ENCODE measurements at regions of chr13 and their contacts with region 1.

Region 1: GRCh38 chr13:44917589-44918325 is 71.5 kb downstream of the NUFIP1 start:
- DNase-seq: peak; percentile 94
- H3K4me3 Mint-ChIP-seq: no peak overlapping the region
- H3K27ac Mint-ChIP-seq: no peak overlapping the region
- H3K4me1 Mint-ChIP-seq: no peaks in the 10 kb centered on the region
- H3K27me3 Mint-ChIP-seq: no peaks in the 10 kb centered on the region

Region 2: GRCh38 chr13:43878892-43879754 is 1038.6 kb before region 1 on chr13 and contains the start of gene CCDC122:
- intact Hi-C with region 1: loop called (anchors 1 kb)
- DNase-seq: peak; percentile 75
- H3K4me3 Mint-ChIP-seq: peak within 1 kb of the TSS; percentile 84
- H3K27ac Mint-ChIP-seq: peak within 1 kb of the TSS; percentile 81
- H3K4me1 Mint-ChIP-seq: peaks cover 28% of the 10 kb centered on the region
- H3K27me3 Mint-ChIP-seq: peaks cover 15% of the 10 kb centered on the region
- total RNA-seq, gene CCDC122: 0.86 and 1.5 TPM in 2 replicates

Region 3: GRCh38 chr13:44274452-44275205 is 643.1 kb before region 1 on chr13:
- intact Hi-C with region 1: loop called (anchors 1 kb)
- DNase-seq: peak; percentile 22
- H3K4me3 Mint-ChIP-seq: peak overlapping the region; percentile 56
- H3K27ac Mint-ChIP-seq: peak overlapping the region; percentile 85
- H3K4me1 Mint-ChIP-seq: peaks cover 60% of the 10 kb centered on the region
- H3K27me3 Mint-ChIP-seq: no peaks in the 10 kb centered on the region

Region 4: GRCh38 chr13:44710576-44710975 is 207.2 kb before region 1 on chr13:
- intact Hi-C with region 1: loop called (anchors 5 kb)
- DNase-seq: no peak
- H3K4me3 Mint-ChIP-seq: no peak overlapping the region
- H3K27ac Mint-ChIP-seq: no peak overlapping the region
- H3K4me1 Mint-ChIP-seq: peaks cover 18% of the 10 kb centered on the region
- H3K27me3 Mint-ChIP-seq: peaks cover 26% of the 10 kb centered on the region

Region 5: GRCh38 chr13:44904967-44905366 is 12.8 kb before region 1 on chr13:
- intact Hi-C with region 1: no loop called
- DNase-seq: no peak
- H3K4me3 Mint-ChIP-seq: no peak overlapping the region
- H3K27ac Mint-ChIP-seq: no peak overlapping the region
- H3K4me1 Mint-ChIP-seq: no peaks in the 10 kb centered on the region
- H3K27me3 Mint-ChIP-seq: peaks cover 5% of the 10 kb centered on the region

Region 6: DNA sequence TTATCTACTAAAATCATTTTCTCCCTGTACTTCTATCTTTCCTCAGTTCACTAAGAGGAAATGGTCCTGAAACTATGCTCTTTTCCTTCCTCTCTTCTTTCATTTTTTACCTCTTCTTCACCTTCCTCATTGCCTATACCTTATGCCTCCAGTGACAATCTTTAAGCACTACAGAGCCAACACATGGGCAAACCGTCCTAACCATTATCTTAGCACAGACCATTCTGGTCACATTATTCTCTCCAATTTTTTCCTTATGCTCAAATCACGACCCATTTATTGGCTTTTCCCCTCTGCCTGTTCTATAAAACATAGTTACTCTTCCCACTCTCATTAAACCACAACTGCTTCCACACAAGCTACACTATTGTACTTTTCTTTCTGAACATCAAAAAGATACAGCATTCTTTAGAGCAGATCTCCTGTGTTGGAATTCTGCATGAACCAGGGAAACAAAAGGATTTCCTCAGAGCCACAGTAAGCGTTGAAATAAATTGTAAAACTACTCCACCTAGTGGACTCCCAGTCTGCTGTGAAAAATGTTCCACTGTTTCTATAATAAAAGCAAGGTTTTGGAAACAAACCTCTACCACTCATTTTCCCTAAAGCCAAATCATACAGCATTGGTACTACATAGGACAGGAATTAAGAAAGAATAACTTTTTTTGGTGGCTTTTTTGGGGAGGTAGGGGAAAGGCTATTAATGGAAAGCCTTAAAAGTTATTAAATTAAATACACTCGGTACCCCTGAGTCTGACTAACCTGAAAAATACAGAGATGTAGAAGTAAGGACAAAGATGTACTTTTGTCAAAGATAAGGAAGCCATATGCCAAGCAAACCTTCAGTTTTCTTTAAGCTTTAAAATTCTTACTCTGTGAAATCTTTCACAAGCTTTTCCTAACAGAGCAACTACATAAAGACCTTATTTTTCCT is 52.1 kb after region 1 on chr13:
- intact Hi-C with region 1: loop called (anchors 1 kb)
- DNase-seq: no peak
- H3K4me3 Mint-ChIP-seq: no peak overlapping the region
- H3K27ac Mint-ChIP-seq: no peak overlapping the region
- H3K4me1 Mint-ChIP-seq: no peaks in the 10 kb centered on the region
- H3K27me3 Mint-ChIP-seq: no peaks in the 10 kb centered on the region

Region 7: GRCh38 chr13:45310341-45311125 is 392.8 kb after region 1 on chr13:
- intact Hi-C with region 1: loop called (anchors 1 kb)
- DNase-seq: no peak
- H3K4me3 Mint-ChIP-seq: peak overlapping the region; percentile 78
- H3K27ac Mint-ChIP-seq: peak overlapping the region; percentile 44
- H3K4me1 Mint-ChIP-seq: peaks cover 18% of the 10 kb centered on the region
- H3K27me3 Mint-ChIP-seq: peaks cover 16% of the 10 kb centered on the region

Region 8: DNA sequence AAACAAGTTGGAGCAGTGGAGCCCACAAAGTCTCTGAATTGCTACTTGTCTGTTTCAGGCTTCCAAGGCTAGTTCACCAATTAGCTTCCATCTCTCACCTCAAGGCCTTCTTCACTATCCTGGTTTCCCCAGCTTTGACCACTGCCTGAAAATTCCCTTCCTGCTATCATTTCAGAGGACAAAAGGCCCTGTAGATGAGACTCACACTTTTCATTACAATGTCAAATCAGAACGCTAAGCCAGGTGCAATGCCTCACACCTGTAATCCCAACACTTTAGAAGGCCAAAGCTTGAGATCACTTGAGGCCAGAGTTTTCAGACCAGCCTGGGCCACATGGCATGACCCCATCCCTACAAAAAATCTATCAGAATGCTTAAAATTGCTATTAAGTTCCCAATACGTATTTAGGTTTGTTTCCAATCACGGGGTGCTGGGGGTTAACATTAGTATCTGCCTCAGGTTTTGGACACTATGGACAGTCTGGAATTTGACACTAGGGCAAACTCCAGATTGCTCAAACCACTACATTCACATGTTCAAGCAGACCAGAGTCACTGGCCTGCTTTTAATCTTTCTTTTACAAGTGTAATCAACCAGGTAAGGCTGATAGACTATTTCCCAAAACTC is 417.8 kb after region 1 on chr13:
- intact Hi-C with region 1: no loop called
- DNase-seq: no peak
- H3K4me3 Mint-ChIP-seq: peak overlapping the region; percentile 99
- H3K27ac Mint-ChIP-seq: peak overlapping the region; percentile 57
- H3K4me1 Mint-ChIP-seq: peaks cover 88% of the 10 kb centered on the region
- H3K27me3 Mint-ChIP-seq: no peaks in the 10 kb centered on the region

Measured in activated T-helper 1 cell treated with anti-CD3 and anti-CD28 coated beads, Interleukin-12 subunit alpha, Interleukin-12 subunit beta, Interleukin-2, Interleukin-4 antibody, amounts not matched to agents 30 ng/mL and 10 ng/mL and 1 ng/mL, durations not matched to agents 14 hours and 24 hours and 36 hours (primary cell).